H1 (cell line): ENCODE measurements at regions of chr19 and their contacts with region 1.

Region 1: GRCh38 chr19:1551068-1552040 is 16.8 kb downstream of the MEX3D start:
- DNase-seq: no peak
- H3K4me3 ChIP-seq: no peak overlapping the region
- H3K27ac ChIP-seq: no peak overlapping the region
- H3K4me1 ChIP-seq: no peaks in the 10 kb centered on the region
- H3K27me3 ChIP-seq: no peaks in the 10 kb centered on the region
- CTCF ChIP-seq: no peak
- EP300 ChIP-seq: no peak
- POLR2A ChIP-seq: no peak
- RAD21 ChIP-seq: no peak

Region 2: DNA sequence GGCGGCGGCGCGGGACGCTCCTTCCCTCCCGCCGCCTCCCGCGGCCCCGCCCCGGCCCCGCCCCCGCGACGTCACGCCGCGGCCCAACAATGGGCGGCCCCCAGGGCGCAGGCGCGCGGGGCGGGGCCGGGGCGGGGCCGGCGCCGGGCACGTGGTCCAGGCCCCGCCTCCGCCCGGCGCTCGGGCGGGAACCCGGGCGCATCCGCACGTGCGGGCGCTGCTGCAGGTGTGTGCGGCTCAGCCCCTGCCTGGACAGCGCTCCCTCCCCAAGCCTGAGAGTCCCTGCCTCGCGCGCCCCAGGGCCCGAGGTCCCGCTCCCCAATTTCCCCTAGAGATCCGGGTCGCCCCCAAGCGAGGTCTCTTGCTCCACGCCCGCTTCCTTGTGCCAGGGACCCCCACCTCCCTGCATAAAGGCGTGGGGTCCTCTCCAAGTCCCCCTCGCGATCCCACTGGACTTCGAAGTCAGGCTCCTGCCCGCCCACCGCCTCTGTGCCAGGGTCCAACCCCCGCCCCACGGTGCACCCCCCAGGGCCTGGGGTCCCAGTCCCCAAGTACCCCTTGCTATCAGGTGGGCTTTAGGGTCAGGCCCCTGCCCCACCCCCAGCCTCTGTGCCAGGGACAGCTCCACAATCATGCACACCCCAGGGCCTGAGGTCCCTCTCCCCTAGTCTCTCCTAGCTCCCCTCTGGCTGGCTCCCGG is 17.1 kb after region 1 on chr19 and contains the start of gene MEX3D:
- CTCF ChIA-PET with region 1: interaction called, 17 read pairs
- POLR2A ChIA-PET with region 1: interaction called, 9 read pairs
- DNase-seq: peak in 1 of 2 experiments; percentile 79
- H3K4me3 ChIP-seq: peak within 1 kb of the TSS; percentile 68 to 99 (median 85)
- H3K27ac ChIP-seq: peak within 1 kb of the TSS; percentile 91
- H3K4me1 ChIP-seq: peaks cover 0 to 10% (median 7%) of the 10 kb centered on the region in 4 experiments; a peak in 6 of 7 replicates
- H3K27me3 ChIP-seq: peaks cover 8 to 26% (median 14%) of the 10 kb centered on the region in 4 experiments
- CTCF ChIP-seq: no peak
- EP300 ChIP-seq: no peak
- POLR2A ChIP-seq: no peak
- RAD21 ChIP-seq: no peak
- total RNA-seq, gene MEX3D: 78.8 and 83.4 TPM in 2 replicates